ENCODE measurements at regions of chr19 and their contacts with region 1.

Region 1: DNA sequence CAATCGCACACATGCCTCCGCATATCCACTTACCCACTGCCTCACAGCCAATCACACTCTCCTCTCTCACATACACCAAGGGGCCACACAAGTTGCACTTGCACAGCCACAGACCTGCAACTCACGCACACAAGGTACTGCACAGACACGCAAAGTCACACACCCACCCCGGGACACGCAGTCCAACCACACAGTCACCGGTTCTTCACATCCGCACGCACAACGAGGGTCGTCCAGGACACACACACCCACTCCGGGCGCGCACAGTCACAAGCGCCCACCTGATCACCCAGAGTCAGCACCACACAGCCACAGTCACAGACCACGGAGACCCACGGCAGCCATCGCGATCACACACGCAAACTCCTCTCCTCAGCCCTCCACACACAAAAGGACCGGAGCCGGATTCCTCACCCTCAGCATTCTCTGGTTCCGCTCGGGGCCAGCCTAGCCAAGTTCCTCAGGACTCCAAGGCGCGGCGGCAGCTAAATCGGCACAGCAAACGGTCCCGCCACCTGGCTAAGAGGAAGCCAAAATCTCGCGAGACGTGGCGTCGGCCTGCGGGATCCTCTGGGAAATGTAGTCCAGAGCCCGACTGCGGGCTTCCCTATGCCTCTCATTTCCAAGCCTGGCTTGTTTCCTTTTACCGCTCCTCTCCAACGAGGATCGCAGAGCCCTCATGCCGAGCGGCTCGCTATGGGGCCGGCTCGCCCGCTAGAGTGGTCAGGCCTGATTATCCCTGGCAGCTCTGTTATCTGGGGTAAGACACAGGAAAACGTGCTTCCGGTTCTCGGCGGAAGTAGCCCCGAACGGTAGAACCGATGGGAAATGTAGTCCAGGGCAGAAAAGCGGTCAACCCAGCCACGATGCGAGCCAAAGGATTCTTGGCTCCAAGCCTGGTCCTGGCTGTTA is at the start of gene ZNF850:
- DNase-seq: peak; percentile 97
- ATAC-seq: peak; percentile 92
- H3K4me3 Mint-ChIP-seq: peak within 1 kb of the TSS; percentile 99
- H3K27ac Mint-ChIP-seq: peak within 1 kb of the TSS; percentile 97
- H3K4me1 Mint-ChIP-seq: peaks cover 20% of the 10 kb centered on the region
- H3K27me3 Mint-ChIP-seq: no peaks in the 10 kb centered on the region
- total RNA-seq, gene ZNF850: 7.0 to 10.7 TPM

Region 2: DNA sequence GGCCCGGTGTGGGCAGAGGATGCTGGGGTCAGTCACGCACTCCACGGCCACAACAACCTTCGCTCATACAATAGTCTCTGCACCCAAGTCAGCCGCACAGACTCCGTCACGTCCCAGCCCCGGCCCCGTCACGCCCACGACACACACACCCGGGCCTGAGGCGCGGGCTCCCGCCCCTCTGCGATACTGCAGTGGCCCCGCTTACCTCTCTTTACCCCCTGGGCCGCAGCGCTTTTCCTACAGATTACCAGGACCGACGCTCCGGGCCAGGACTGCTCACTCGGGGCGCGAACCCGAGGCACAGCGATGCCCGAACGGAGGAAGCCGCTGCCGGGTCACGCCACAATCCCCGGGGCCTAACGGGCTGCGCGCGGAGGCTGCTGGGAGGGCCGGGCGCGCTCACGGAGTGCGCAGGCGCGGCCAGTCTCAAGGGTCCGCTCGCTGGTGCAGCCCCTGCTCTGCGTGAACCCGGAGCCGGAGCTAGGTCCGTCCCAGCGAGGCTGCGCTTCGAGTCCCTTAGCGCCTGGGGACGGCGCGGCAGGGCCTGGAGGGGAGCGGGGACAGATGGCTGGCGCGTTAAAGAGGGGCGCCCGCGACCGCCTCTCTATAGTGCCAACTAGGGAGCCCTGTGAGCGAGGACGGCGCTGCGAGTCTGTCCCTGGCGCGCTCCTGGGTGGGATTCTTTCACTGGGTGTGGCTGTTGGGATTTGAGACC is 354.1 kb before region 1 on chr19 and contains the start of gene ZFP82:
- CTCF ChIA-PET with region 1: no interaction called
- POLR2A ChIA-PET with region 1: no interaction called
- intact Hi-C with region 1: loop called in 1 of 2 experiments (anchors 1 kb)
- DNase-seq: peak; percentile 89
- ATAC-seq: peak; percentile 90
- H3K4me3 Mint-ChIP-seq: peak within 1 kb of the TSS; percentile 94
- H3K27ac Mint-ChIP-seq: peak within 1 kb of the TSS; percentile 97
- H3K4me1 Mint-ChIP-seq: peaks cover 12% of the 10 kb centered on the region
- H3K27me3 Mint-ChIP-seq: peaks cover 13% of the 10 kb centered on the region
- total RNA-seq, gene ZFP82: 8.4 to 8.8 TPM

Region 3: GRCh38 chr19:36605101-36605876 is 167.3 kb before region 1 on chr19 and contains the start of gene ZNF382:
- CTCF ChIA-PET with region 1: no interaction called
- POLR2A ChIA-PET with region 1: no interaction called
- intact Hi-C with region 1: loop called in 1 of 2 experiments (anchors 1 kb)
- DNase-seq: peak; percentile 94
- ATAC-seq: peak; percentile 86
- H3K4me3 Mint-ChIP-seq: peak within 1 kb of the TSS; percentile 81
- H3K27ac Mint-ChIP-seq: peak within 1 kb of the TSS; percentile 91
- H3K4me1 Mint-ChIP-seq: peaks cover 20% of the 10 kb centered on the region
- H3K27me3 Mint-ChIP-seq: no peaks in the 10 kb centered on the region
- total RNA-seq, gene ZNF382: 14.9 to 20.0 TPM

Region 4: GRCh38 chr19:36687214-36688056 is 85.1 kb before region 1 on chr19 and contains the start of gene ZNF567:
- CTCF ChIA-PET with region 1: no interaction called
- POLR2A ChIA-PET with region 1: no interaction called
- intact Hi-C with region 1: loop called (anchors 1 to 2 kb)
- DNase-seq: peak; percentile 99
- ATAC-seq: peak; percentile 93
- H3K4me3 Mint-ChIP-seq: peak within 1 kb of the TSS; percentile 99
- H3K27ac Mint-ChIP-seq: peak within 1 kb of the TSS; percentile 96
- H3K4me1 Mint-ChIP-seq: peaks cover 27% of the 10 kb centered on the region
- H3K27me3 Mint-ChIP-seq: no peaks in the 10 kb centered on the region
- total RNA-seq, gene ZNF567: 7.4 to 8.6 TPM

Region 5: DNA sequence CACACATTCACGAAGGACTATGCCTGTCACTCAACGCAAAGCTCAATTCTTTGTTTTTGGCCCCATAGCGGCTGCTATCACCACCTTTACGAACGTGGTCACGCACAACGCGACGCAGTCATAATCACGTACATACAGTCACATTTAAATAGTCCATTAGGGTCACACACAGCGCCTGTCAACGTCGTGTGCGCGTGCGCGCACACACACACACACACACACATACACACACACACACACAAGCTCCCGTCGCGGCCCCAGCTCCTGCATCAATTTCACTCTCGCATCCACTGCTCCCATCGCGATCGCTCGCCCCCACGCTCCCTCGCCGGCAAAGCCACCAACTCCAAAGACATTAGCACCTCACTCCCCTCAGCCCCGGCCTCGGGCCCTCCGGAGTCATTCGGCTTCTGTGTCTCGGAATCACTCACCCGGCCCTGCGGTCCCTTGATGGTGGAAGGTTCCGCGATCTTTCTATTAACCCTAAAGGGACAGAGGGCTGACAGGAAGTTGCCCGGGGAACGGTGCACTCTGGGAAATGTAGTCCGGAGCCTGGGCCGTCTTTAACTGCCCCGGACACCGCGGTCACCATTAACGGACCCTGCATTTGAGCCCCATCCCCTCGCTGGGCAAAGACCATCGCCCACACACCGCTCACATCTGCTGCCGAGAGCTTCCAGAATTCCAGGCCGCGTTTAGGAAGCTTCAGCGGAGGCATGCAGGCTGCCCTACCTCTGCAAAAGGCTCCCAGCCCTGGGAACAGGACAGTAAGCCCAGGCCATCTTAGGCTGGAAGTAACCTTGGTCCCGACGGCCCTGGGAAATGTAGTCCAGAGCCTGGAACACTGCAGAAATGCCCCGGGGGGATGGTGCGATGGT is 65.6 kb after region 1 on chr19 and contains the start of gene ZNF790:
- CTCF ChIA-PET with region 1: no interaction called
- POLR2A ChIA-PET with region 1: no interaction called
- intact Hi-C with region 1: loop called in 1 of 2 experiments (anchors 1 kb)
- DNase-seq: peak; percentile 92
- ATAC-seq: peak; percentile 97
- H3K4me3 Mint-ChIP-seq: no peak within 1 kb of the TSS
- H3K27ac Mint-ChIP-seq: peak within 1 kb of the TSS; percentile 72
- H3K4me1 Mint-ChIP-seq: peaks cover 2% of the 10 kb centered on the region
- H3K27me3 Mint-ChIP-seq: no peaks in the 10 kb centered on the region
- total RNA-seq, gene ZNF790: 7.1 to 8.8 TPM

Region 6: DNA sequence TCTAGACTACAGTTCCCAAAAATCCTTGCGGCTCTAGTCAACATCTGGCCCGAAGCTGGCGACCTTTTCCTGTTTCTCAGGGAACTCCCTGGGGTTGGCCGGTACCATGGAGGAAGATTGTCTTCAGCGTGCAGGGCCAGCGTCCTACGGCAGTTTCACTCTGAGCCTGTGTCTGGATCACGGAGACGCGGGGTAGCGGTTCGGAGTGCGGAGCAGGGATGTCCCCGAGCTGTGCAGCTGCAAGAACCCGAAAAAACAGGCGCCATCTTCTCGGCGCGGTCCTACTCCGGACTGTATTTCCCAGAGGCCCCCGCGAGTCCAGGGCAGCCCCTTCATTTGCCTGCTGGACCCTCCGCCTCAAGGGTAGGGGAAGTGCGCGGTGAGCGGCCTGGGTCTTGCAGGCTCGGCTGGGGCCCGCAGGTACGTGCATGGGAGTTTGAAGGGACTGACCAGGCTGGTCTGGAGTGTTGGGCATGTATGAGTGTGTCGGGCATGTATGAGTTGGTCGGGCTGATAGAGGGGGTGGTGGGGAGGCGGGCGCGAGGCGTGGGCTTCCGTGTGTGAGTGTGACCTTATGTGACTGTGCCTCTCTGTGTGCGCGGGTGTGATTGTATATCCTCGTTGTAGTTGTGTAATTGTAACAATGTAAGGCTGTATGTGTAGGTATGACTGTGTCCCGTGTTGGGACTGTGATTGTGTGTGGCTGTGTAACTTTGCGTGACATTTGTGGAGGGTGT is 445.5 kb after region 1 on chr19 and contains the start of gene ZNF383:
- CTCF ChIA-PET with region 1: no interaction called
- POLR2A ChIA-PET with region 1: no interaction called
- intact Hi-C with region 1: loop called in 1 of 2 experiments (anchors 1 kb)
- DNase-seq: peak; percentile 89
- ATAC-seq: peak; percentile 87
- H3K4me3 Mint-ChIP-seq: peak within 1 kb of the TSS; percentile 93
- H3K27ac Mint-ChIP-seq: peak within 1 kb of the TSS; percentile 99
- H3K4me1 Mint-ChIP-seq: peaks cover 24% of the 10 kb centered on the region
- H3K27me3 Mint-ChIP-seq: no peaks in the 10 kb centered on the region
- total RNA-seq, gene ZNF383: 8.5 to 9.2 TPM